Naive thymus-derived CD4-positive, alpha-beta T cell (primary cell): ENCODE measurements at regions of chr2 and their contacts with region 1.

Region 1: DNA sequence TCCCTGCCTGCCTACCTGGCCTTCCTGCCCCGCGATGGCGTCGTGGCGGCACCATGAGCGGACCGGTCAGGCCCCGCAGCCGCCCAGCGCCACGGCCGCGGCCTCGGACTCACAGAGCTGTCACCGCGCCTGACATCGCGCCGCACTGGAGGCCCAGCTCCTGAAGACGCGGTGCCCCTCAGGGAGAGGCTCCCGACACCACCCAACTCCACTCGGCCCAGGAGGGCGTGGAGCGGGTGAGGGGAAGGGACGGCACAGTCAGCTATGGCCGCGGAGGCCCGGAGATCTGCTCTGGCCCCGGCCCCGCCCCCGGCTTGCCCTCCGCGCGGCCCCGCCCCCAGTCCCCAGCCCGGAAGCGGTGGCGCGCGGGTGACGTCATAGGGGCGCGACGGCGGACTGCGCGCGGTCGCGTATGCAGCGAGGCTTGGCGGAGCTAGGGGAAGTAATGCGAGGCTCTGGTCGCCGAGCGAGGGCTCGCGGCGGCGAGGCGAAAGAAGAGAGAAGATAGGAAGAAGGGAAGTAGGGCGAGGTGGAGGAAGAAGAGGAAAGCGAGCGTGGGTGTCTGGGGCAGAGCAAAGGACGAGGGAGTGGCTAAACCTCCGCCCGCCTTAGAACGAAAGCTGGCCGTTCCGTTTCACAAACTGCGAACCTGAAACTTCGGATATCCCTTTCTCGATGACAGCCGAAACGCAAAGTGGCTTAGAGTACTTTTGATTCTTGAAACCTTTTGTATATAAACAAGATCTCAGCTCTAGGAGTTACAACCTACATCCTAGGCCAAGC is at the start of gene SLC35F5:
- DNase-seq: peak; percentile 84 to 99 (median 92)
- ATAC-seq: peak; percentile 97
- H3K4me3 ChIP-seq: peak within 1 kb of the TSS; percentile 79
- H3K4me3 Mint-ChIP-seq: peak within 1 kb of the TSS; percentile 87 to 99 (median 97)
- H3K27ac ChIP-seq: peak within 1 kb of the TSS; percentile 96
- H3K27ac Mint-ChIP-seq: peak within 1 kb of the TSS; percentile 97 to 100 (median 99)
- H3K4me1 ChIP-seq: peaks cover 8 to 11% of the 10 kb centered on the region in 2 donors
- H3K4me1 Mint-ChIP-seq: peaks cover 10 to 38% (median 28%) of the 10 kb centered on the region in 7 donors
- H3K27me3 ChIP-seq: no peaks in the 10 kb centered on the region
- H3K27me3 Mint-ChIP-seq: no peaks in the 10 kb centered on the region
- total RNA-seq, gene SLC35F5: 20.9 to 33.4 (median 26.4) TPM

Region 2: GRCh38 chr2:113233593-113234550 is 522.7 kb before region 1 on chr2:
- CTCF ChIA-PET with region 1: no interaction called
- POLR2A ChIA-PET with region 1: no interaction called
- intact Hi-C with region 1: loop called in 1 of 2 experiments (anchors 5 kb)
- DNase-seq: no peak
- ATAC-seq: no peak
- H3K4me3 ChIP-seq: no peak overlapping the region
- H3K4me3 Mint-ChIP-seq: peak overlapping the region in 2 of 10 donors; percentile 14 to 41
- H3K27ac ChIP-seq: no peak overlapping the region
- H3K27ac Mint-ChIP-seq: no peak overlapping the region
- H3K4me1 ChIP-seq: peaks cover 0 to 4% of the 10 kb centered on the region in 2 donors
- H3K4me1 Mint-ChIP-seq: peaks cover 3 to 39% (median 12%) of the 10 kb centered on the region in 7 donors
- H3K27me3 ChIP-seq: no peaks in the 10 kb centered on the region
- H3K27me3 Mint-ChIP-seq: no peaks in the 10 kb centered on the region

Region 3: GRCh38 chr2:113692698-113693428 is 63.7 kb before region 1 on chr2:
- CTCF ChIA-PET with region 1: no interaction called
- POLR2A ChIA-PET with region 1: no interaction called
- intact Hi-C with region 1: loop called in 1 of 2 experiments (anchors 2 kb)
- DNase-seq: peak in 5 of 9 donors; percentile 6 to 44 (median 30)
- ATAC-seq: peak; percentile 71
- H3K4me3 ChIP-seq: no peak overlapping the region
- H3K4me3 Mint-ChIP-seq: peak overlapping the region; percentile 73 to 90 (median 81)
- H3K27ac ChIP-seq: no peak overlapping the region
- H3K27ac Mint-ChIP-seq: peak overlapping the region; percentile 40 to 93 (median 87)
- H3K4me1 ChIP-seq: peaks cover 13 to 20% of the 10 kb centered on the region in 2 donors
- H3K4me1 Mint-ChIP-seq: peaks cover 16 to 35% (median 27%) of the 10 kb centered on the region in 7 donors
- H3K27me3 ChIP-seq: no peaks in the 10 kb centered on the region
- H3K27me3 Mint-ChIP-seq: peaks cover 0 to 9% (median 0%) of the 10 kb centered on the region in 5 donors

Region 4: DNA sequence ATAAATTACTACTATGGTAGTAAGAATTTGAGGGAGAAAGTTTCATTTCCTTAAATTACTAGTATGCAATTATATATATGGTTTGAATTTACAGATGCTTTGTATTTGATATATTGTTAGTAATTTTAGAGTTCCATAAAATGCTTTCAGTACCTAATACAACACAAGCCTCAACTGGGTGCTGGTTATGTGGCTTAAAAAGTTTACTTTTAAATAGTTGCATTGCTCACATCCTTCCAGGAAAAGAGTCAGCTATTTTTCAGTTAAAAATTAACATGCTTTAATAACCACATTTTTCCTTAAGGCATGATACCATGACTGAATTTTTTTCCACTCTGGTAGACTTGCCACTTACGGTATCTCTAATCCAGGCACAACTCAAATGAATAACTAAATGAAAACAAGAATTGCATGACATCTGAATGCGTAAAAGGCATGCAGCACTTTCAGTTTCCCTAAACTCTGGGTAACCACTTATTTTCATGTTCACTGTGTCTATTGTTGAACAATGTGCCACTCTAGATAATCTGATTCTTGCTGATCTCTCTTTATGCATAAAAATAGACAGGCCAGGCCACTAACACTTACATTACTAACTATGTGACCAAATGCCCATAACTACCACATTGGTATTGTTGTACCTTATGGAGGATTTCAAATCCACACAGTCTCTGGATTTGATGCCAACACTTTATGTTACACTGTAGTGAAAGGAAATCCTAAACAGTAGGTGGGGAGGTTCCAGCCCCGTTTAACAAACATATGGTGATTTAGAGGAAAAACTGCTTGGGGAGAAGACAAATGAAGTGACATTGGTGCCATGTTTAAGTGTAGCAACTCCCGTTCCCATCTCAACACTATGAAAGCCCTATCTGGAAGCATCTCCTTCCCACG is 35.4 kb after region 1 on chr2:
- CTCF ChIA-PET with region 1: no interaction called
- POLR2A ChIA-PET with region 1: no interaction called
- intact Hi-C with region 1: loop called in 1 of 2 experiments (anchors 2 kb)
- DNase-seq: no peak
- ATAC-seq: no peak
- H3K4me3 ChIP-seq: no peak overlapping the region
- H3K4me3 Mint-ChIP-seq: peak overlapping the region in 1 of 10 donors; percentile 71
- H3K27ac ChIP-seq: no peak overlapping the region
- H3K27ac Mint-ChIP-seq: peak overlapping the region in 1 of 9 donors; percentile 73
- H3K4me1 ChIP-seq: no peaks in the 10 kb centered on the region
- H3K4me1 Mint-ChIP-seq: peaks cover 0 to 24% (median 0%) of the 10 kb centered on the region in 7 donors
- H3K27me3 ChIP-seq: no peaks in the 10 kb centered on the region
- H3K27me3 Mint-ChIP-seq: peaks cover 0 to 3% (median 0%) of the 10 kb centered on the region in 5 donors

Region 5: DNA sequence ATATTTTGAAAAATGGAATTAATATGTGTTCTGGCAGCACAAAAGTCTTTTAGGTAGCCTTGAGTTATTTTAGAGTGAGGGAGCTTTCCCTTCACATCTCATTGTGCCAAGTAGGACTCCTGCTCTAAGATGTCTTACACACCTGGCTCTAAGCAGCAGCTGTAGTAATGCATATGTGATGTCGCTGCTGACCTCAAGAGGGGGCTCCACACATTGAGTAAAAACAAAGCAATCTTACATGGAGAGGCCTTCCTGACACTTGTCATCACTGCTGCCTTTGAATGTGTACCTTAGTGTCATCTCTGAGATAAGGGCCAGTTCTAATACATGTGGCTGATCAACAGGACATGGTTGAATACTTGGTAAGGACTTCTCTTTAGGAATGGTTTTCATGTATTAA is 209.1 kb after region 1 on chr2:
- CTCF ChIA-PET with region 1: no interaction called
- POLR2A ChIA-PET with region 1: no interaction called
- intact Hi-C with region 1: loop called in 1 of 2 experiments (anchors 5 kb)
- DNase-seq: peak in 6 of 9 donors; percentile 27 to 41 (median 34)
- ATAC-seq: peak; percentile 84
- H3K4me3 ChIP-seq: no peak overlapping the region
- H3K4me3 Mint-ChIP-seq: no peak overlapping the region
- H3K27ac ChIP-seq: no peak overlapping the region
- H3K27ac Mint-ChIP-seq: peak overlapping the region in 7 of 9 donors; percentile 8 to 77 (median 20)
- H3K4me1 ChIP-seq: no peaks in the 10 kb centered on the region
- H3K4me1 Mint-ChIP-seq: peaks cover 0 to 29% (median 11%) of the 10 kb centered on the region in 7 donors
- H3K27me3 ChIP-seq: no peaks in the 10 kb centered on the region
- H3K27me3 Mint-ChIP-seq: no peaks in the 10 kb centered on the region